Right cardiac atrium (tissue), 5 donors: ENCODE measurements at regions of chr21 and their contacts with region 1.

Region 1: DNA sequence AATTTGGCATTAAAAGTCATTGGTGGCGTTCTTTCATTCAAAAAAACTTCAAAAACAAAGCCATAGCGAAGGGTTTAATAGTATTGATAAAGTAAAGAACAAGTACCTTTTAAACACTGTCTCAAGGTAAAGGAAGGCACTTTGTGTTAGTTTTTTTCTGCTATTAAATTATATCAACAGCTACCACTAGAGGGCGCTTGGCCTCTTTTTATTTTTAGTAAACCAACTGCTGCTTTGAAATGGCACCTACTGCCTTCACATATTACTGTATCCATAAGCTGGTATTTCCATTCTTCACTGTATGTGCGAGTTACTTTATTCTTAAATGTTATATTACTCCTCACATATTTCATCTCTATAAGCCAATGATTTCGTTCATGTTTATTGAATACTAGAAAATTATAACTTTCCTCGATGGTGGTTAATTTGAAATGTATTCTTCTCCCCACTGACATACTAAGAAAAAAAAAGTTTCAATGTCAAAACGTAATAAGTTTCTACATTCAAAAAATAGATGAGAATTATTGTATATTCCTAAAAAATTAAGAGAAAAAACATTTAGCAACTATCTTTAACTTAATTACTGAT is 125.7 kb upstream of the CXADR start:
- DNase-seq: no peak
- ATAC-seq: peak; percentile 34 to 36
- H3K4me3 ChIP-seq: no peak overlapping the region
- H3K27ac ChIP-seq: no peak overlapping the region
- H3K4me1 ChIP-seq: no peaks in the 10 kb centered on the region
- H3K27me3 ChIP-seq: no peaks in the 10 kb centered on the region

Region 2: DNA sequence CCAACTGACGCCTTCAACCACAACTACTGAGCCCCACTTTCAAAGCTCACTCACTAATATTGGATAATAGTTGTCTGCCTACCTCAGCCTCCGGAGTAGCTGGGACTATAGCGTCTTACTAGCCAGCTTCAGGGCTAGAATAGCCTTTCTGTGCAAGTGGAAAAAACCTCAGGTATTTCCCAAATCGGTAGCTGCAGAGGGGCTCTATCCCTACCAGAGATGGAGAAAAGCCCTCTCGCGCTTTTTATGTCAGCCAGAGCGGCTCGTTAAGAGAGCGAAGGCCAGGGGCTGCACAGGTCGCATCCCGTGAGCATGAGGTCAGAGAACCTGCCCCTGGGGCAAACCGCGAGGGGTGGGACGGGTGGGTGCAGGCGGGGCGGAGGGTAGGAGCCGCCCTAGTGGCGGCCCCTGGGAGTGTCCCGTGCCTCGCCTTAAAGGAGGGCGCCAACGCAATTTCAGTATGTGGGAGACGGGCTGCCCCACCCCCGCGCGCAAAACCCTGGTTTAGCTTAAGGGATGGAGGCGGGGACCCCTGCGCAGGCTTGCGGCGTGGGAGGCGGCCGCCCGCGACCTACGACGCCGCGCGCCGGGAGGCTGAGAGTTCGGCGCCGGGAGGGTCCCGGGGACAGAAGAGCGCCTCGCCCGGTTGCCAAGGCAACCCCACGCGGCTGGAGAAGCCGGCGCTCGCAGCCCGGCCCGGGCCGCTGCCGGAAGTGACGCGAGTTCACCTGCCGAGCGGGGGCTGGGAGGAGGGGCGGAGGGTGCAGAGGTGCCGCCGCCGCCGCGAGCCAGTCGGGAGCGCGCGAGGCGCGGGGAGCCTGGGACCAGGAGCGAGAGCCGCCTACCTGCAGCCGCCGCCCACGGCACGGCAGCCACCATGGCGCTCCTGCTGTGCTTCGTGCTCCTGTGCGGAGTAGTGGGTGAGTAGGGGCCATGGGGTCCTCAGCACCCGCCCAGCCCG is 125.4 kb after region 1 on chr21 and contains the start of gene CXADR:
- intact Hi-C with region 1: loop called in 1 of 4 experiments (anchors 5 kb)
- DNase-seq: peak; percentile 61 to 88 (median 87)
- ATAC-seq: peak; percentile 92 to 94
- H3K4me3 ChIP-seq: peak within 1 kb of the TSS; percentile 93
- H3K27ac ChIP-seq: peak within 1 kb of the TSS; percentile 89
- H3K4me1 ChIP-seq: no peaks in the 10 kb centered on the region
- H3K27me3 ChIP-seq: no peaks in the 10 kb centered on the region
- total RNA-seq, gene CXADR: 13.8 to 22.5 (median 19.9) TPM

Region 3: DNA sequence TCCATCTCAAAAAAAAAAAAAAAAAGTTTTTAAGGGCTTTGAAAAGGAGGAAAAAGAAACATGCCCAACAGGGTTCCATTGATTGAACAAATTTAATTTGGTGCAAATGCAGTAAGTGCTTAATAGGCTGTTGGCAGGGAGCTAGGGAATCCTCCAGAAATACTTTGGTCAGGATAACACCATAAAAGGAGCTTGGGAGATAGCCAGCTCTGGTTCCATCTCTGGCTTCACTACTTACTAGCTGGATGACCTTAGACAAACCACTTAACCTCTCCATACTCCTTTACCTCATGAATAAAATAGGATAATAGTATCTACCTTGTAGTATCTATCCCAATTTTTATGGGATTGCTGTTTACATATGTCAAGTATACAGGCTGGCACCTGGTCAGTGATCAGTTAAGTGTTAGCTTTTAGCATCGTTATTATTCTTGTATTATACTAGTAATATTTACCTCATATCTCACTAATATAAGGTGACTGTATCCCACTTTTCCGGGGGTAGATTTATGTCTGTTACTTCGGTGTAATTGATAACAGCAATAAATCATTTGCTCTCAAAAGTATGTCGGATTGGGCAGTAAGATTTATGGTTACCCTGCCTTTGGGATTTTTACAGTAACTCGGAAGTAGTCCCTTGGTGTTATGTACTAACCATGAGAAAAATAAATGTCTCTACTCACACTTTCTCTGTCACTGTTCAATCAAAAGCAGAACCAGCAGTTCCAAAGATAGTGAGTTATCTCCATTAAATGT is 189.1 kb after region 1 on chr21:
- intact Hi-C with region 1: loop called (anchors 5 to 10 kb)
- DNase-seq: no peak
- ATAC-seq: no peak
- H3K4me3 ChIP-seq: no peak overlapping the region
- H3K27ac ChIP-seq: no peak overlapping the region
- H3K4me1 ChIP-seq: no peaks in the 10 kb centered on the region
- H3K27me3 ChIP-seq: no peaks in the 10 kb centered on the region